ENCODE measurements at regions of chr9 and their contacts with region 1.

Region 1: DNA sequence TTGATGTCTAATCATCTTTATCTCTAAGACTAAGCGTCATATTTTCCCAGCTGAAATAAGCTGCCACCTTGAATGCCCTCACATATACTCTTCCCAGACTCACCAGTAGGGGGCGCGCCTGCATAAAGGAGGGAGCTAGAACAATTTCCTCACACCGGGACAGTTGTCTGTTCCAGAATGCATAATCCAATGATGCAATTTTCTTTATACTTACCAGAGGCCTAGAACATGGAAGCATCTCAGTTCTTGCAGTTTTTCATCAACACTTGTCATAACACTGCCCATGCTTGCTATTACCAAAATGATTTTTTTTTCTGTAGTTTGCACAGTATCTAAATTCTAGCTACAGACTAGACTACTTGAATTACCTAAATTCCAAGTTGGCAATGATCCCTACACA is 203.9 kb downstream of the FRMD3 start:
- DNase-seq: peak; percentile 85
- ATAC-seq: peak; percentile 82
- H3K4me3 Mint-ChIP-seq: no peak overlapping the region
- H3K27ac Mint-ChIP-seq: no peak overlapping the region
- H3K4me1 Mint-ChIP-seq: no peaks in the 10 kb centered on the region
- H3K27me3 Mint-ChIP-seq: no peaks in the 10 kb centered on the region
- CTCF ChIP-seq: peak; percentile 95

Region 2: GRCh38 chr9:83093939-83094338 is 240.4 kb before region 1 on chr9:
- CTCF ChIA-PET with region 1: no interaction called
- POLR2A ChIA-PET with region 1: no interaction called
- DNase-seq: no peak
- ATAC-seq: no peak
- H3K4me3 Mint-ChIP-seq: no peak overlapping the region
- H3K27ac Mint-ChIP-seq: no peak overlapping the region
- H3K4me1 Mint-ChIP-seq: no peaks in the 10 kb centered on the region
- H3K27me3 Mint-ChIP-seq: no peaks in the 10 kb centered on the region
- CTCF ChIP-seq: no peak

Region 3: GRCh38 chr9:83469722-83470121 is 135.4 kb after region 1 on chr9:
- CTCF ChIA-PET with region 1: interaction called, 15 read pairs
- POLR2A ChIA-PET with region 1: no interaction called
- DNase-seq: no peak
- ATAC-seq: peak; percentile 15; the same call in 1 of the 2 replicates
- H3K4me3 Mint-ChIP-seq: no peak overlapping the region
- H3K27ac Mint-ChIP-seq: no peak overlapping the region
- H3K4me1 Mint-ChIP-seq: peaks cover 52% of the 10 kb centered on the region
- H3K27me3 Mint-ChIP-seq: no peaks in the 10 kb centered on the region
- CTCF ChIP-seq: no peak

Region 4: DNA sequence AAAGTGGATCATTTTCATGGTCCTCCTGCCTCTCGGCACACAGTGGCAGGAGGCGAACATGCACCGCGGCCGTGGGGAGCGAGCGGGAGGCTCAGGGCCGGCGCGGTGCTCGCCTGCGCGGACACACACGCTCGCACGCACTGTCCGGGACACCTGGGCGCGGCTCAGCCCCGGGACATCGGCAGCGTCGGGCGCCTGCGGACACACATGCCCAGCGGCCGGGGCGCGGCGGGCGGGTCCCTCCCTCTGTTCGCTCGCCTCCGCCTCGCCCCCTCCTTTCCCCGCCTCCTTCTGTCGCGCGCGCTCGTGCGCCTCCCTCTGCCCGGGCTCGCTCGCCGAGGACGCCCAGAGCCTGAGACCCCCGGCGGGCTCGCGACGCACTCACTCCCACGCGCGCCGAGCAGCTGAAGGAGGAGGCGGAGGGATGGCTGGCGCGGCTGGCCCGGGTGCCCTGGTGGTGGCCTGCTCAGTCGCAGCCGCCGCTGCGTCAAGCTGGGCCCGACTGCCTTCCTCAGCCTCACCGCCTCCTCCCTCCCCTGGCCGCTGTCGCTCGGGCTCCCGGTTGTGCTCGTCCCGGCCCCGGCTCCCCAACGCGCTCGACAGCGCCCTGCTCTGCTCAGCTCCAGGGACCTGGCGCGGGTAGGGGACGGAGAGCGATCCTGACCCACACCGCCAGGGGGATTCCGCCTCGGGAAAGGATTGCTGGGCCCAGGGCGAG is 204.0 kb after region 1 on chr9 and contains the start of gene FRMD3:
- CTCF ChIA-PET with region 1: interaction called, 128 read pairs
- POLR2A ChIA-PET with region 1: no interaction called
- DNase-seq: peak; percentile 83
- ATAC-seq: peak; percentile 94
- H3K4me3 Mint-ChIP-seq: peak within 1 kb of the TSS; percentile 76
- H3K27ac Mint-ChIP-seq: no peak within 1 kb of the TSS
- H3K4me1 Mint-ChIP-seq: peaks cover 20% of the 10 kb centered on the region
- H3K27me3 Mint-ChIP-seq: peaks cover 64% of the 10 kb centered on the region
- CTCF ChIP-seq: peak; percentile 44
- total RNA-seq, gene FRMD3: 0.89 to 1.4 TPM (median 1.0 TPM) in 3 replicates

Region 5: DNA sequence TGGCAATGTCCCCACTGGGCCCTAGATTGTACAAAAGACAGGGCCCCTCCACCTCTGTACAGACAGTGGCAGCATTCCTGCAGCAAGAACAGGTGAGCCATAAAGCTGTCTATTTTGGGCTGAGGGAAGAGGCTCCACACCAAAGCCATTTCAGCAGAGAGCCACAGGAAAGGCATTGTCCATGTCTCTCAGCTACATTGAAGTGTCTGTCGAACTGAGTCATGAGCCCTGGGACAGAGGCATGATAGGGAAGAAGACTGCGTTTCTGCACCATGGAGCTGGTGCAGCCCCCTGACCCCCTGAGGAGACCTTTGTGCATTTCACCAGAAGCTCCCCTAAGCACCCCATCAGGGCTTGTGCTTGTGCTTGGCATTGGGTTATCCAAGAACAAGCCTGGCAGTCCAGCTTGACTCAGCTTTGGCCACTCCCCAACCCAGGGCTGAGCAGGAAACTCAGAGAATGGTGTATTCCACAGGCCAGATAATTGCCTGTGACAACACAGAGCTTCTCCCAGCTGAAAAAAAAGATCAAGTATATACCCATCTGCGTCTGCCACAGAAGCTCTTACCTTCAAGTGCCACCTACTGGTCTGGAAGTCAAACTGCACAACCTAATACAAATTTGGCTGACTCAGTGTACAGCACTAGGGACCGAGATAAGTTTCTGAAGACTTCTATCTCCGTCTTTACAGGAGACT is 209.8 kb after region 1 on chr9:
- CTCF ChIA-PET with region 1: interaction called, 128 read pairs
- POLR2A ChIA-PET with region 1: no interaction called
- DNase-seq: no peak
- ATAC-seq: peak; percentile 96
- H3K4me3 Mint-ChIP-seq: no peak overlapping the region
- H3K27ac Mint-ChIP-seq: no peak overlapping the region
- H3K4me1 Mint-ChIP-seq: 0 out of 2 replicates have a peak, but pooled peaks cover under 1% of the 10 kb centered on the region
- H3K27me3 Mint-ChIP-seq: peaks cover 25% of the 10 kb centered on the region
- CTCF ChIP-seq: peak; percentile 70

Region 6: DNA sequence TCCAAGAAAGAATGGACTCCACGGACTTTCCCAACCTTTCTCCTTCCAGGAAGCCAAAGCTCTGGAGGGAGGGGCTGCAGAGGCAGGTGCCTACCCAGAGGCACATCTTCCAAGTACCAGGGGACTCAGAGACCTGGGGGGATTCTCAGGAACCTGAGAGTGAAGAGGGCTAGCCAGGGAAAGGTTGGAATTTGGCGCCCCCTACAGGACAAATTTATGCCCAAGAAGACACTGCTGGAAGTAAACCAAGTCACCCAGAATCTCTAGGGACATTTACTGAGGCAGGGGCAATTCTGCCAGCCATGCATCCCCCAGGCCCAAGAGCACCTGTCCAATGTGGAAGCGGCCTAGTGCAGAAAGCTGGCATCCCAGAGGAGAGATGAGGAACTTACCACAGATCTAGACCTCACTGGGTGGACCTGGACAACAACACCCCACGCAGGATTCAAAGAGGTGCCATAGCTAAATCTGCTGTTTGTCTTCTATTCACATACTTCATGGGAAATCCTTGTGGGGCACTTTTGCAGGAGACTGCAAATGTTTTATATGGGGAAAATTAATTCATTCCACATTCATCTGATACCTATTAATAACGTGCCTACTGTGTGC is 262.7 kb after region 1 on chr9:
- CTCF ChIA-PET with region 1: interaction called, 14 read pairs
- POLR2A ChIA-PET with region 1: no interaction called
- DNase-seq: peak; percentile 80
- ATAC-seq: peak; percentile 96
- H3K4me3 Mint-ChIP-seq: no peak overlapping the region
- H3K27ac Mint-ChIP-seq: no peak overlapping the region
- H3K4me1 Mint-ChIP-seq: no peaks in the 10 kb centered on the region
- H3K27me3 Mint-ChIP-seq: no peaks in the 10 kb centered on the region
- CTCF ChIP-seq: peak; percentile 89

Measured in WTC11 (cell line).